ENCODE measurements at regions of chr11 and their contacts with region 1.

Region 1: GRCh38 chr11:62831520-62832335 is at the start of gene STX5:
- DNase-seq: peak; percentile 96 to 100 (median 99)
- ATAC-seq: peak; percentile 98
- H3K4me3 ChIP-seq: peak within 1 kb of the TSS; percentile 95
- H3K4me3 Mint-ChIP-seq: peak within 1 kb of the TSS; percentile 87 to 99 (median 96)
- H3K27ac ChIP-seq: peak within 1 kb of the TSS; percentile 99
- H3K27ac Mint-ChIP-seq: peak within 1 kb of the TSS; percentile 93 to 100 (median 99)
- H3K4me1 ChIP-seq: peaks cover 16% of the 10 kb centered on the region in 2 donors
- H3K4me1 Mint-ChIP-seq: peaks cover 15 to 57% (median 45%) of the 10 kb centered on the region in 7 donors
- H3K27me3 ChIP-seq: no peaks in the 10 kb centered on the region
- H3K27me3 Mint-ChIP-seq: no peaks in the 10 kb centered on the region
- total RNA-seq, gene STX5: 47.0 to 152 (median 57.3) TPM

Region 2: DNA sequence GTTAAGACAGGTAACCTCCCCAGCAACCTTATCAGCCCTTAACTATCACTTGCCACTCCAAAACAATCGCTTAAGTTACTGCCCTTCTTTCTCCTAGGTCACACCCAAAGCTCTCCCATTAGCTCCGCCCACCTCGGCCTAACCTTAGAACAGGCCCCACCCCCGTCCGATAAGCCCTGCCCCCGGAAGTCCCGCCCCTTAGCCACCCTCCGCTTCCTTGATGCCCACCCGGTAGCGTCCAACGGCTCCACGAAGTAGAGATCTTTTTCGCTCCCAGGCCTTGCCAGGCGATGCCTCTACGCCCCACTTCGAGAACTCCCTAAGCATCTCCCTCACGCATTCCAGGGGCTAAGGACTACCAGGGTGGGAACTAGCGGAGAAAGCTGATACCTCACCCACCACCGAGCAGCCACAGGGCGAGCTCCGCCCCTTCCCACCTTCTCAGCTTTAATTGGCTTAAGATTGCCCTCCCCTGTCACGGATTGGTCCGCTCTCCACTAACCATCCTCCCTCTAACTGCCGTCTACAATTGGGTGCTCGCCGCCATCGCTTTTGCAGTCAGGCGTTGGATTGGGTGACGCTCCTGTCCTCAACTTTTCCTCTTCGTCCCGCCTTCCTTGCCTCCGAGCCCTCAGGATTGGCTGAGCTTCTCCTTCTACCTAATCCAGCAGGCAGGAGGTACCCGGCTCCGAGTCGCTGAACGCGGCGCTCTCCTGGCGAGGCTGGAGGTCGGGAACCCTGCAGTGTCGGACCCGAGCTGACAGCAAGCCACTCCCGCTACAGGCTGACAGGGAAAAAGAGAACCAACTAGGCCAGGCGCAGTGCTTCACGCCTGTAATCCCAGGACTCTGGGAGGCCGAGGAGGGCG is 77.8 kb before region 1 on chr11 and contains the start of gene ZBTB3:
- CTCF ChIA-PET with region 1: no interaction called
- POLR2A ChIA-PET with region 1: interaction called, 27 read pairs
- intact Hi-C with region 1: loop called in 1 of 2 experiments (anchors 1 kb)
- DNase-seq: peak; percentile 89 to 99 (median 98)
- ATAC-seq: peak; percentile 96
- H3K4me3 ChIP-seq: peak within 1 kb of the TSS; percentile 94
- H3K4me3 Mint-ChIP-seq: peak within 1 kb of the TSS; percentile 86 to 100 (median 98)
- H3K27ac ChIP-seq: peak within 1 kb of the TSS; percentile 83
- H3K27ac Mint-ChIP-seq: peak within 1 kb of the TSS; percentile 93 to 99 (median 95)
- H3K4me1 ChIP-seq: peaks cover 15 to 16% of the 10 kb centered on the region in 2 donors
- H3K4me1 Mint-ChIP-seq: peaks cover 9 to 41% (median 29%) of the 10 kb centered on the region in 7 donors
- H3K27me3 ChIP-seq: no peaks in the 10 kb centered on the region
- H3K27me3 Mint-ChIP-seq: no peaks in the 10 kb centered on the region
- total RNA-seq, gene ZBTB3: 6.4 to 24.1 (median 19.0) TPM

Region 3: GRCh38 chr11:62771144-62772021 is 60.3 kb before region 1 on chr11 and contains the start of gene TAF6L:
- CTCF ChIA-PET with region 1: no interaction called
- POLR2A ChIA-PET with region 1: interaction called, 8 read pairs
- intact Hi-C with region 1: loop called in 1 of 2 experiments (anchors 1 kb)
- DNase-seq: peak; percentile 80 to 98 (median 82)
- ATAC-seq: peak; percentile 92
- H3K4me3 ChIP-seq: peak within 1 kb of the TSS; percentile 66
- H3K4me3 Mint-ChIP-seq: peak within 1 kb of the TSS; percentile 88 to 98 (median 94)
- H3K27ac ChIP-seq: peak within 1 kb of the TSS; percentile 82
- H3K27ac Mint-ChIP-seq: peak within 1 kb of the TSS; percentile 89 to 97 (median 94)
- H3K4me1 ChIP-seq: peaks cover 10 to 13% of the 10 kb centered on the region in 2 donors
- H3K4me1 Mint-ChIP-seq: peaks cover 17 to 37% (median 27%) of the 10 kb centered on the region in 7 donors
- H3K27me3 ChIP-seq: no peaks in the 10 kb centered on the region
- H3K27me3 Mint-ChIP-seq: no peaks in the 10 kb centered on the region
- total RNA-seq, gene TAF6L: 13.1 to 34.9 (median 24.1) TPM

Region 4: DNA sequence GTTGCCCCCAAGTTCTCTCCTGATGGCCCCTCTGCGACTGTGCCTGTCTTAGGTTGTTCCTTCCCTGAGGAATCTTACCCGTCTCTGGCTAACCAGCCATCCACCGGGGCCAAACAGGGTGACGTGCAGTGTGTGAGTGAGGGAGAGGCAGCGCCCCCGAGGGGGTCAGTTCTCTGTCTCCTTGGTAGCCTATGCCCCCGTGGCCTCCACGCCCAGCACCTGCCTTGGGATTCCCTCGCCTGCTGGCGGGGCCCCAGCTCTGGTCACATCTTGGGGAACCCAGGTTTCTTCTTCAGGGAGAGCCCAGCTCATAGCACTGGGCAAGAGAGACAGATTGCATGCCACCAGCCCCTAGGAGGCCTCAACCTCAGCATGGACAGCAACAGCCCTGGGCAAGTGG is 32.2 kb before region 1 on chr11:
- CTCF ChIA-PET with region 1: interaction called, 3 read pairs
- POLR2A ChIA-PET with region 1: interaction called, 10 read pairs
- intact Hi-C with region 1: no loop called
- DNase-seq: no peak
- ATAC-seq: no peak
- H3K4me3 ChIP-seq: no peak overlapping the region
- H3K4me3 Mint-ChIP-seq: no peak overlapping the region
- H3K27ac ChIP-seq: no peak overlapping the region
- H3K27ac Mint-ChIP-seq: peak overlapping the region in 4 of 9 donors; percentile 14 to 80 (median 46)
- H3K4me1 ChIP-seq: peaks cover 11 to 13% of the 10 kb centered on the region in 2 donors
- H3K4me1 Mint-ChIP-seq: peaks cover 13 to 33% (median 30%) of the 10 kb centered on the region in 7 donors
- H3K27me3 ChIP-seq: no peaks in the 10 kb centered on the region
- H3K27me3 Mint-ChIP-seq: no peaks in the 10 kb centered on the region

Region 5: GRCh38 chr11:62805076-62805892 is 26.4 kb before region 1 on chr11 and contains the start of gene NXF1:
- CTCF ChIA-PET with region 1: no interaction called
- POLR2A ChIA-PET with region 1: interaction called, 29 read pairs
- intact Hi-C with region 1: loop called (anchors 1 kb)
- DNase-seq: peak; percentile 91 to 99 (median 97)
- ATAC-seq: peak; percentile 92
- H3K4me3 ChIP-seq: peak within 1 kb of the TSS; percentile 87
- H3K4me3 Mint-ChIP-seq: peak within 1 kb of the TSS; percentile 90 to 100 (median 99)
- H3K27ac ChIP-seq: peak within 1 kb of the TSS; percentile 97
- H3K27ac Mint-ChIP-seq: peak within 1 kb of the TSS; percentile 95 to 100 (median 99)
- H3K4me1 ChIP-seq: peaks cover 13 to 18% of the 10 kb centered on the region in 2 donors
- H3K4me1 Mint-ChIP-seq: peaks cover 17 to 55% (median 34%) of the 10 kb centered on the region in 7 donors
- H3K27me3 ChIP-seq: no peaks in the 10 kb centered on the region
- H3K27me3 Mint-ChIP-seq: peaks cover 0 to 2% (median 0%) of the 10 kb centered on the region in 5 donors
- total RNA-seq, gene NXF1: 92.1 to 421 (median 195) TPM

Region 6: GRCh38 chr11:62860835-62861563 is 29.3 kb after region 1 on chr11:
- CTCF ChIA-PET with region 1: interaction called, 5 read pairs
- POLR2A ChIA-PET with region 1: interaction called, 122 read pairs
- intact Hi-C with region 1: loop called (anchors 1 to 2 kb)
- DNase-seq: no peak
- ATAC-seq: no peak
- H3K4me3 ChIP-seq: no peak overlapping the region
- H3K4me3 Mint-ChIP-seq: no peak overlapping the region
- H3K27ac ChIP-seq: no peak overlapping the region
- H3K27ac Mint-ChIP-seq: peak overlapping the region in 2 of 9 donors; percentile 58 to 59
- H3K4me1 ChIP-seq: peaks cover 5 to 8% of the 10 kb centered on the region in 2 donors
- H3K4me1 Mint-ChIP-seq: peaks cover 7 to 54% (median 17%) of the 10 kb centered on the region in 7 donors
- H3K27me3 ChIP-seq: no peaks in the 10 kb centered on the region
- H3K27me3 Mint-ChIP-seq: peaks cover 0 to under 1% (median 0%) of the 10 kb centered on the region in 5 donors

Region 7: DNA sequence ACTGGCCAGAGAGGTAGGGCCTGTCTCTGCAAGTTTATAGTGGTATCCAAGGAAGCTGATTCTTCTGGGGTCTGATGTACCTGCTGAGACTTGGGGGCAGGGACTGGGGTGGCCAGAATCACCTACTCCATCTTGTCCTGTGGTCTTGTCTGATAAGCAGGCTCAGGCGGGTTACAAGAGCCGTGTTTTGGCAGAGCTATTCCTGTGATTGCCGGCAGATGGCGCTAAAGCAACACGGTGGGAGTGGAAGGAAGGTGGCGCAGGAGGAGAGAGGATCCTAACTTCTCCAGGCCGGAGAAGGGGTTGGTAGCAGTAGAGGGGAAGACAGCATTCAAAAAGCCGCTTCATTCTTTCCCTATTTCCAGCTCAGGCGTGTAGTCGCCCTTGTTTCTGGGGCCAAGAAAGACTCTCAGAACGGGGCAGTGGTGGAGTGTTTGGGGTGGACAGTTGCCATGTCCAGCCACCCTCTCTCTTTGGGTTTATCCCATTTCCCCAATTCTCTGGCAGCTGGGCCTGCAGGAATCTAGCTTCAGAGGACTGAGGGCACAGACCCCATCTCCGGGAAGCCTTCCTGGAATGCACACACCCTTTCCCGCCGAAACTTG is 74.3 kb after region 1 on chr11:
- CTCF ChIA-PET with region 1: no interaction called
- POLR2A ChIA-PET with region 1: no interaction called
- intact Hi-C with region 1: no loop called
- DNase-seq: peak; percentile 44 to 80 (median 63)
- ATAC-seq: peak; percentile 86
- H3K4me3 ChIP-seq: no peak overlapping the region
- H3K4me3 Mint-ChIP-seq: peak overlapping the region in 1 of 10 donors; percentile 2
- H3K27ac ChIP-seq: no peak overlapping the region
- H3K27ac Mint-ChIP-seq: no peak overlapping the region
- H3K4me1 ChIP-seq: no peaks in the 10 kb centered on the region
- H3K4me1 Mint-ChIP-seq: peaks cover 0 to 18% (median 0%) of the 10 kb centered on the region in 7 donors
- H3K27me3 ChIP-seq: no peaks in the 10 kb centered on the region
- H3K27me3 Mint-ChIP-seq: peaks cover 0 to 23% (median 5%) of the 10 kb centered on the region in 5 donors

Region 8: GRCh38 chr11:64152841-64153691 is 1321.3 kb after region 1 on chr11:
- CTCF ChIA-PET with region 1: no interaction called
- POLR2A ChIA-PET with region 1: no interaction called
- intact Hi-C with region 1: no loop called
- DNase-seq: peak; percentile 40 to 84 (median 62)
- ATAC-seq: peak; percentile 95
- H3K4me3 ChIP-seq: no peak overlapping the region
- H3K4me3 Mint-ChIP-seq: no peak overlapping the region
- H3K27ac ChIP-seq: no peak overlapping the region
- H3K27ac Mint-ChIP-seq: no peak overlapping the region
- H3K4me1 ChIP-seq: no peaks in the 10 kb centered on the region
- H3K4me1 Mint-ChIP-seq: peaks cover 0 to 11% (median 3%) of the 10 kb centered on the region in 7 donors
- H3K27me3 ChIP-seq: no peaks in the 10 kb centered on the region
- H3K27me3 Mint-ChIP-seq: peaks cover 0 to 5% (median 0%) of the 10 kb centered on the region in 5 donors

Measured in naive thymus-derived CD4-positive, alpha-beta T cell (primary cell).